T-cell (primary cell): ENCODE measurements at regions of chr5 and their contacts with region 1.

Region 1: DNA sequence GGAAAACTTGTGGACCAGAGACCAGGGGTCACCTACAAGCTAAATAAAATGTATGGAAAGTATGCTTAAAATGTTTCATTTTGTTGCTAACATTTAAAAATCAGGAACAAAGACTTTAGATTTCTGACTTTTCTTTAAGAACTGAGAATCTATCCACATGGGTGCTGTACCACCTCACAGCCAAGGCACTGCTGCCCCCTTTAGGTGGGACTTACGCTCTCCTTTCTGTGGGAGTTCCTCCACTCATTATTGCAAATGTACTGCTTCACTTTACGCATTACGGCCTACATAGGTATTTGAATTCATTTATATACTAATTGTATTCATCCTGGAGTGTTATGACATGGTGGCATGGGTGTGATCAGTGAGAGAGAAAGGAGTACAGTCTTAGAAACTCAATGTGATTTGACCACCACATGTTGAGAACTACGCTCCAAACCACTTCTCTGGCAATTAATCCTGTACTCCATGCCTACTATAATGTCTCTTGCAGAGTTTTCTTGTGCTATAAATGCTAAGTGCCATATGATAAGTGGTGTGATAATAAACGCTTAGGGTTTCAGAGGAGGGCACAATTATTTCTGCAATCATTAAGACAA is 24.7 kb upstream of the CETN3 start:
- DNase-seq: peak in 32 of 35 experiments; percentile 7 to 63 (median 26)
- ATAC-seq: peak in 3 of 4 experiments; percentile 35 to 65 (median 54)
- H3K4me3 ChIP-seq: no peak overlapping the region
- H3K4me3 Mint-ChIP-seq: no peak overlapping the region
- H3K27ac ChIP-seq: no peak overlapping the region
- H3K27ac Mint-ChIP-seq: no peak overlapping the region
- H3K4me1 ChIP-seq: no peaks in the 10 kb centered on the region
- H3K4me1 Mint-ChIP-seq: no peaks in the 10 kb centered on the region
- H3K27me3 ChIP-seq: no peaks in the 10 kb centered on the region
- H3K27me3 Mint-ChIP-seq: peaks cover 0 to 7% of the 10 kb centered on the region in 2 donors

Region 2: GRCh38 chr5:89901983-89902382 is 532.2 kb before region 1 on chr5:
- CTCF ChIA-PET with region 1: no interaction called
- POLR2A ChIA-PET with region 1: no interaction called
- DNase-seq: no peak
- ATAC-seq: no peak
- H3K4me3 ChIP-seq: no peak overlapping the region
- H3K4me3 Mint-ChIP-seq: no peak overlapping the region
- H3K27ac ChIP-seq: no peak overlapping the region
- H3K27ac Mint-ChIP-seq: no peak overlapping the region
- H3K4me1 ChIP-seq: no peaks in the 10 kb centered on the region
- H3K4me1 Mint-ChIP-seq: no peaks in the 10 kb centered on the region
- H3K27me3 ChIP-seq: no peaks in the 10 kb centered on the region
- H3K27me3 Mint-ChIP-seq: no peaks in the 10 kb centered on the region

Region 3: GRCh38 chr5:90084331-90084730 is 349.9 kb before region 1 on chr5:
- CTCF ChIA-PET with region 1: no interaction called
- POLR2A ChIA-PET with region 1: no interaction called
- DNase-seq: no peak
- ATAC-seq: no peak
- H3K4me3 ChIP-seq: no peak overlapping the region
- H3K4me3 Mint-ChIP-seq: no peak overlapping the region
- H3K27ac ChIP-seq: no peak overlapping the region
- H3K27ac Mint-ChIP-seq: no peak overlapping the region
- H3K4me1 ChIP-seq: no peaks in the 10 kb centered on the region
- H3K4me1 Mint-ChIP-seq: no peaks in the 10 kb centered on the region
- H3K27me3 ChIP-seq: no peaks in the 10 kb centered on the region
- H3K27me3 Mint-ChIP-seq: no peaks in the 10 kb centered on the region

Region 4: GRCh38 chr5:90326995-90327394 is 107.2 kb before region 1 on chr5:
- CTCF ChIA-PET with region 1: no interaction called
- POLR2A ChIA-PET with region 1: no interaction called
- DNase-seq: no peak
- ATAC-seq: no peak
- H3K4me3 ChIP-seq: no peak overlapping the region
- H3K4me3 Mint-ChIP-seq: no peak overlapping the region
- H3K27ac ChIP-seq: no peak overlapping the region
- H3K27ac Mint-ChIP-seq: no peak overlapping the region
- H3K4me1 ChIP-seq: no peaks in the 10 kb centered on the region
- H3K4me1 Mint-ChIP-seq: no peaks in the 10 kb centered on the region
- H3K27me3 ChIP-seq: peaks cover 0 to 16% of the 10 kb centered on the region in 2 experiments
- H3K27me3 Mint-ChIP-seq: peaks cover 9 to 20% of the 10 kb centered on the region in 2 donors

Region 5: GRCh38 chr5:90474235-90475109 is 40.3 kb after region 1 on chr5 and contains the starts of genes MBLAC2 and POLR3G:
- CTCF ChIA-PET with region 1: interaction called in 1 of 2 experiments, 11 read pairs
- POLR2A ChIA-PET with region 1: interaction called in 1 of 2 experiments, 3 read pairs
- DNase-seq: peak; percentile 82 to 94 (median 90)
- ATAC-seq: peak; percentile 87 to 93 (median 89)
- H3K4me3 ChIP-seq: peak within 1 kb of the TSS; percentile 88 to 96
- H3K4me3 Mint-ChIP-seq: peak within 1 kb of the TSS; percentile 94 to 98 (median 96)
- H3K27ac ChIP-seq: peak within 1 kb of the TSS; percentile 57
- H3K27ac Mint-ChIP-seq: peak within 1 kb of the TSS; percentile 95 to 96
- H3K4me1 ChIP-seq: peaks cover 11 to 15% of the 10 kb centered on the region in 2 experiments
- H3K4me1 Mint-ChIP-seq: peaks cover 36 to 48% (median 43%) of the 10 kb centered on the region in 3 donors
- H3K27me3 ChIP-seq: no peaks in the 10 kb centered on the region
- H3K27me3 Mint-ChIP-seq: no peaks in the 10 kb centered on the region
- total RNA-seq, gene MBLAC2: 6.0 to 13.0 (median 9.8) TPM
- total RNA-seq, gene POLR3G: 0.84 to 2.3 (median 1.6) TPM

Region 6: GRCh38 chr5:90503596-90503995 is 69.4 kb after region 1 on chr5:
- CTCF ChIA-PET with region 1: interaction called in 1 of 2 experiments, 10 read pairs
- POLR2A ChIA-PET with region 1: no interaction called
- DNase-seq: no peak
- ATAC-seq: no peak
- H3K4me3 ChIP-seq: no peak overlapping the region
- H3K4me3 Mint-ChIP-seq: no peak overlapping the region
- H3K27ac ChIP-seq: no peak overlapping the region
- H3K27ac Mint-ChIP-seq: no peak overlapping the region
- H3K4me1 ChIP-seq: no peaks in the 10 kb centered on the region
- H3K4me1 Mint-ChIP-seq: peaks cover 3 to 7% (median 7%) of the 10 kb centered on the region in 3 donors
- H3K27me3 ChIP-seq: no peaks in the 10 kb centered on the region
- H3K27me3 Mint-ChIP-seq: no peaks in the 10 kb centered on the region

Region 7: DNA sequence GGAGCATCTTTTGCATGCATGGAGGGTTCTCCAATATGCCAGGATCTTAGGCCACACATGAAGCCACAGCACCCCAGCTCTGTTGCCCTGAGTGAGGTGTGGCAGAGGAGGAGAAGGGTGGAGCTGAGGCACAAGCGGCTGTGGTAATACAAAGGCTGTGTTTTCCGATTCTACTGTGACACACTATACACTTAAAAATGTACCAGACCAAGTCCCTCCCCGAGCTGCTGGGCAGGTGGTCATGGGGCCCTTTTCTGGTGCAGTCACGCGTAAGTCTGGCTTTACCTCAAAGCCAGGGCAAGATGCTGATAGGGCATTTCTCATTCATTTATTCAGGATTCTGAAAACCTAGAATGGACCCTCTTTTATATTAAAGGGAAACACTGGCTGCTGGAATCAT is 128.1 kb after region 1 on chr5:
- CTCF ChIA-PET with region 1: no interaction called
- POLR2A ChIA-PET with region 1: no interaction called
- DNase-seq: no peak
- ATAC-seq: no peak
- H3K4me3 ChIP-seq: no peak overlapping the region
- H3K4me3 Mint-ChIP-seq: no peak overlapping the region
- H3K27ac ChIP-seq: no peak overlapping the region
- H3K27ac Mint-ChIP-seq: no peak overlapping the region
- H3K4me1 ChIP-seq: peaks cover 0 to 7% of the 10 kb centered on the region in 2 experiments
- H3K4me1 Mint-ChIP-seq: peaks cover 10 to 12% (median 11%) of the 10 kb centered on the region in 3 donors
- H3K27me3 ChIP-seq: peaks cover 15 to 16% of the 10 kb centered on the region in 2 experiments
- H3K27me3 Mint-ChIP-seq: peaks cover 31 to 53% of the 10 kb centered on the region in 2 donors

Region 8: GRCh38 chr5:90783460-90784333 is 349.5 kb after region 1 on chr5:
- CTCF ChIA-PET with region 1: interaction called, 4 to 50 read pairs
- POLR2A ChIA-PET with region 1: no interaction called
- DNase-seq: peak; percentile 6 to 75 (median 54)
- ATAC-seq: peak in 3 of 4 experiments; percentile 42 to 65 (median 45)
- H3K4me3 ChIP-seq: no peak overlapping the region
- H3K4me3 Mint-ChIP-seq: no peak overlapping the region
- H3K27ac ChIP-seq: no peak overlapping the region
- H3K27ac Mint-ChIP-seq: no peak overlapping the region
- H3K4me1 ChIP-seq: no peaks in the 10 kb centered on the region
- H3K4me1 Mint-ChIP-seq: no peaks in the 10 kb centered on the region
- H3K27me3 ChIP-seq: no peaks in the 10 kb centered on the region
- H3K27me3 Mint-ChIP-seq: peaks cover 8 to 25% of the 10 kb centered on the region in 2 donors